Activated naive CD8-positive, alpha-beta T cell treated with anti-CD3 and anti-CD28 coated beads, Interleukin-2, amount 10 ng/mL, durations not matched to agents 7 days and 5 days (primary cell): ENCODE measurements at regions of chr6 and their contacts with region 1.

Region 1: GRCh38 chr6:34236131-34236996 is at the start of gene HMGA1:
- DNase-seq: peak; percentile 90
- ATAC-seq: peak; percentile 59
- H3K4me3 Mint-ChIP-seq: peak within 1 kb of the TSS; percentile 93
- H3K27ac Mint-ChIP-seq: peak within 1 kb of the TSS; percentile 98
- H3K4me1 Mint-ChIP-seq: peaks cover 29% of the 10 kb centered on the region
- H3K27me3 Mint-ChIP-seq: no peaks in the 10 kb centered on the region
- total RNA-seq, gene HMGA1: 233 to 247 TPM

Region 2: GRCh38 chr6:34196126-34196830 is 40.1 kb before region 1 on chr6:
- POLR2A ChIA-PET with region 1: interaction called, 22 read pairs
- DNase-seq: peak; percentile 95
- ATAC-seq: peak; percentile 99
- H3K4me3 Mint-ChIP-seq: peak overlapping the region; percentile 85
- H3K27ac Mint-ChIP-seq: peak overlapping the region; percentile 56
- H3K4me1 Mint-ChIP-seq: peaks cover 3% of the 10 kb centered on the region
- H3K27me3 Mint-ChIP-seq: peaks cover 19% of the 10 kb centered on the region

Region 3: DNA sequence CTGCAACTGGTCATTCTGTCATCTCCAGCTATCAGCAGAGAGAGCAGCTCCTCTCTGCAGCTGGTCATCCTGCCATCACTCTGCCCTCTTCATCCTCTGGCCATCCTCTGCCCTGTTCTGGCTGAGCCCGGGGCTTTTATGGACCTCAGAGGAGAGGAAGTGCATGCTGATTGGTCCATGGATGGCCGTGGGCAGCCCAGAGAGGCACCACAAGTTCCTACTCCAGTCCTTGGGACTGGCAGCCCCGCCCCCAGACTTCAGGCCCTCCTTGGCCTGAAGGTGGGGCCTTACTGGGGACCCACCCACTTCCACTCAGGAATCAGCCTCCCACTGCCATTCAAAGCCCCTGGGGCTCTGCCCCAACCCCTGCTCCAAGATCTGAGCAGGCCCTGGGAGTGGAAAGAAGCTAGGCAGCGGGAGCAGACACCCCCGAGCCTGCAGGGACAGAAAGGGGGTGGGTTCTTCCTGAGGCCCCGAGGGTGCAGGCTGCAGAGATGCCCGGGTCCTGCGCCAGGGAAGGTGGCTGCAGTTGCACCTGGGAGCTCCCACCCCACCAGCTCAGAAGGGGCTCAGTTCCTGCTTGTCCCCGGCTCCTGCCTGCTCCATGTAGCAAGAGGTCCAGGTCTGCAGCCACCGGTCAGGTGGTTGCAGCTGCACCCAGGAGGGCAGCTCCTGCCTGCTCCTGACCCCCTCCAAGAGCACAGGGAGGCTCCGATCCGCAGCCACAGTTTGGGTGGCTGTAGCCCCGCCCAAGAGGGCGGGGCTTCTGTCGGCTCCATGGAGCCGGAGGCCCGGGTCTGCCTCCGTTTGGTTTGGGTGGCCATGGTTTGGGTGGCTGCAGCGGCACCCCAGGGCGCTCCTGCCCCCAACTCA is 33.8 kb before region 1 on chr6:
- POLR2A ChIA-PET with region 1: interaction called, 13 read pairs
- DNase-seq: no peak
- ATAC-seq: no peak
- H3K4me3 Mint-ChIP-seq: no peak overlapping the region
- H3K27ac Mint-ChIP-seq: no peak overlapping the region
- H3K4me1 Mint-ChIP-seq: peaks cover 11% of the 10 kb centered on the region
- H3K27me3 Mint-ChIP-seq: peaks cover 8% of the 10 kb centered on the region

Region 4: DNA sequence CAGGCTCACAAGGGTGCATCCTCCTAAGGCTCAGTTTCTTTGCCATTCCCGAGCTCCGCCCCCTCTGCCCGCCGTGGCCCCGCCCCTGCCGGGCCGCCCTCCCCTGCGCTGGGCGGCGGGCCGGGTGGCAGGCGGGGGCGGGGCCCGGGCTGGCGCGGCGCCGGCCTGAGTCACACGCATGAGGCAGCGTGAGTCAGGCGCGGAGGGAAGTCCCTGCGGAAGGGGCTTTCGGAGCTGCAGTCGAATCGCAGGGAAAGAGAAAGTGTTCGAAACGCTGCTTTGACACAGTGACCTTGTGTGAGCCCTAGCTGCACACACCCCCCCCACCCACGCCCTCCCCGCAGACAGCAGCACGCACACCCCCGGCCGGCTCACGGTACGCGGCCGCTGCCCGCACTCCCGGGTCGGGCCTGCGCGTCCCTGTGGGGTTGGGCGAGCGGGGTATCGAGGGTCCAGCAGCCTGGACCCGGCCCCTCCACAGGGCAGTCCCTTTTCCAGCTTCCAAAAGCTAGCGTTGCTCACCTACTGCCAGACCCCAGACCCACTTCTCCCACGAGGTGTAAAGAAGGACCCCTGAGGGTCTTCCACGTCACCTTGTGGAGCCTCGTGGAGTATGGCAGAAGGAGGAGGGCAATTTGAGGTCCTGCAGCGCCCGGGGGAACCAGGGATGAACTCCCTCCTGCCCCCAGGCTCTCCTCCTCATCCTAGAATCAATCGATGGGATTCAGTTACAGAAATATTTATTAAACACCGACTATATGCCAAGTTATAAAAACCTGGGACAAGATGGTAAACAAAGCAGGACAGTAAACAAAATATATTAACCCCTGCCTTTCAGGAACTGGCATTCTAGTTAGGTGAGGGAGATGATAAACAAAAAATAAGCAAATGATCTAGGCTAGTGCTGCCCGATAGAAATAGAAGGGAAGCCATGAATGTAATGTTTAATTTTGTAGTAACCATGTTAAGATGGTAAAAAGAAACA is 12.1 kb before region 1 on chr6:
- POLR2A ChIA-PET with region 1: interaction called, 72 read pairs
- DNase-seq: peak; percentile 95
- ATAC-seq: peak; percentile 97
- H3K4me3 Mint-ChIP-seq: peak overlapping the region; percentile 73
- H3K27ac Mint-ChIP-seq: peak overlapping the region; percentile 86
- H3K4me1 Mint-ChIP-seq: peaks cover 18% of the 10 kb centered on the region
- H3K27me3 Mint-ChIP-seq: no peaks in the 10 kb centered on the region

Region 5: DNA sequence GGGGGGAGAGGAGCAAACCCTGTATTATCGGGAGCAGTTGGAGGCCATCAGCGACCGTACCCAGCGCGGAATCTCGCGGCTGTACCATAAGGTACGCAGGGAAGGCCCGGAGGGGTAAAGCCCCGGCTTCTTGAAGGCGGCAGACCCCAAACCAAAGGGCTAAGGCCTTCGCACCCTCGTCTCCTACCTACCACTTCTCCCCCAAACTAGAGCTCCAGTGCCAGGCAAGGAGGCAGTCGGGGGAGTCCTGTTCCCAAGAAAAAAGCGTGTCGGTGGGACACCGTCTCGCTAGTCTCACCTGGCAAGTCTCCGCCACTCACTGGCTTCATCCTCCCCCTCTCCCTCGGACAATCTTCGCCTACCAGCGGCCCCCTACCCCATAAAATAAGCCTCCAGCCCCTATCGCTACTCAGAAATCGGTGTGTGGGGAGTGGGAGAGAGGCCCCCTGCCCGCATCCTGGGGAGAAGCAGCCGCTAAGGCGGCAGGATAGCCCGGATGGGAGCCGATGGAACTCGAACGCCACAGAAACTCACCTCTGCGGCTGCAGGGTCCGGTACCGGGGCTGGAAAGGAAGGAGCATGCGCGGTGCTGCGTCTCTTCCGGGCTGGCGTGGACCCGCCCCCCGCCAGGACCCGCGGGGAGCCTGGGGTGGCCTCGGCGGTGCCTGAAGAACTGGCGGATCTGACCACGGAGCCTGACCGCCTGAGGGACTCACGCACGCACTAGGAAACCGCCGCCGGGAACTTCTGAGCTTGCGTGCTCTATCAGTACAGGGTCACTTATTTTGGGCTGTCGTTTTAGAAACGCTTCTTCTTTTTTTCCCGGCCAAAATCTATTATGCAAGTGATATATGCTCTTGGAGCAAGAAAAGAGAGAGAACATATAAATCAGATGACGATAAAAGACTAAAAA is 189.4 kb after region 1 on chr6 and contains the start of gene RPS10:
- POLR2A ChIA-PET with region 1: interaction called, 10 read pairs
- DNase-seq: peak; percentile 96
- ATAC-seq: peak; percentile 95
- H3K4me3 Mint-ChIP-seq: peak within 1 kb of the TSS; percentile 97
- H3K27ac Mint-ChIP-seq: peak within 1 kb of the TSS; percentile 99
- H3K4me1 Mint-ChIP-seq: peaks cover 26% of the 10 kb centered on the region
- H3K27me3 Mint-ChIP-seq: peaks cover 6% of the 10 kb centered on the region
- total RNA-seq, gene RPS10: 1,507 to 1,529 TPM